Esophagus muscularis mucosa (tissue), 4 donors: ENCODE measurements at regions of chr18 and their contacts with region 1.

Region 1: DNA sequence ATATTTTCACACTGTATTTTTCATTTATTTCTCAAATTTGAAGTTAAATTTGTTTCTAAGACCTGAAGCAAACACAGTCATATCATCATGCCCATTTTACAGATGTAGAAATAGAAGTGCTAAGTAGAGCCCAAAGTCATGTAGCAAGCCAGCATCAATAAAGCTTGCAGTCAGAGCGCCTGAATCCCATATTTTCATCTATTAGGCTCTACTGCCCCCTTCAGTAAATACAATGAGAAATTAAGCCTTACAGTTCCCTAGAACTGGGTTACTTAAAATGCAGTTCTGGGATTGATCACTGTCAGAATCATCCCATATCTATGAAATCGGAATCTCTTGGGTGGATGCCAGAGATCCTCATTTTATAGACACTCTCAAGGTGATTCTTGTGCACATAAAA is 419.9 kb downstream of the TGIF1 start:
- DNase-seq: no peak
- H3K4me3 ChIP-seq: no peak overlapping the region
- H3K27ac ChIP-seq: no peak overlapping the region
- H3K4me1 ChIP-seq: no peaks in the 10 kb centered on the region
- H3K27me3 ChIP-seq: no peaks in the 10 kb centered on the region
- CTCF ChIP-seq: peak in 2 of 3 experiments; percentile 35 to 48
- EP300 ChIP-seq: no peak
- POLR2A ChIP-seq: no peak

Region 2: GRCh38 chr18:3703732-3704176 is 166.1 kb before region 1 on chr18:
- intact Hi-C with region 1: loop called (anchors 10 kb)
- DNase-seq: no peak
- H3K4me3 ChIP-seq: peak overlapping the region in 2 of 4 donors; percentile 12 to 19
- H3K27ac ChIP-seq: no peak overlapping the region
- H3K4me1 ChIP-seq: peaks cover 0 to 11% (median 10%) of the 10 kb centered on the region in 4 donors
- H3K27me3 ChIP-seq: no peaks in the 10 kb centered on the region
- CTCF ChIP-seq: peak; percentile 60 to 75 (median 61)
- EP300 ChIP-seq: no peak
- POLR2A ChIP-seq: no peak

Region 3: GRCh38 chr18:3771121-3771971 is 98.5 kb before region 1 on chr18:
- intact Hi-C with region 1: loop called (anchors 2 kb)
- DNase-seq: peak; percentile 97
- H3K4me3 ChIP-seq: peak overlapping the region; percentile 39 to 52 (median 41)
- H3K27ac ChIP-seq: peak overlapping the region; percentile 15 to 72 (median 58)
- H3K4me1 ChIP-seq: peaks cover 3 to 28% (median 20%) of the 10 kb centered on the region in 4 donors
- H3K27me3 ChIP-seq: no peaks in the 10 kb centered on the region
- CTCF ChIP-seq: peak; percentile 94 to 97 (median 95)
- EP300 ChIP-seq: no peak
- POLR2A ChIP-seq: no peak

Region 4: DNA sequence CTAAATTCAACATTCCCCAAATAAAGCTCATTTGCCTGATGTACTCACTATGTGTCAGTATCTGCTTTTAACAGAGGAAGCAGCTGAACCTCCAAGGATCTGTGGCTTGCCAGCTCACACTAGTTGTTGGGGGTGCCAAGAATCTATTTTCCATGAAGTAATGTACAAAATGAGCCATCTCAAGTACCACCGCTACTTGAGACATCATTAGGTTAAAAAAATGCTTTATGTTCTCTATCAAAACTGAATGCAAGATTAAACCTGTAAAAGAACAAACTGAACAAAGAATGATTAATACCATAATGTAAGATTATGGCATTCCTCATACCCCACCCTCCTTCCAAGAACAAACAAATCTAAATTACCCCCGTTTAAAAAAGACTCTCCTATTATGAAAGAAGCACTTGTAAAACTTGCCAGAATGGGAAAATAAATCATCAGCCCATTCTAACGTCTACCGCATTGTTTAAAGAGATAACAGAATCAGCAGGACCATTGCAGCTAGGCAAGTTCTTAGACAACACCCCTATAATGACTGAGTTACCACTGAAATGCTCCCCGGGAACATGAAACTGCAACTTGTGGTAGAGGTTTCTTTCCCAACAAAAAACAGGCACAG is 113.6 kb after region 1 on chr18:
- intact Hi-C with region 1: loop called (anchors 10 kb)
- DNase-seq: no peak
- H3K4me3 ChIP-seq: no peak overlapping the region
- H3K27ac ChIP-seq: no peak overlapping the region
- H3K4me1 ChIP-seq: no peaks in the 10 kb centered on the region
- H3K27me3 ChIP-seq: no peaks in the 10 kb centered on the region
- CTCF ChIP-seq: no peak
- EP300 ChIP-seq: no peak
- POLR2A ChIP-seq: no peak